ENCODE measurements at regions of chr10 and their contacts with region 1.

Region 1: DNA sequence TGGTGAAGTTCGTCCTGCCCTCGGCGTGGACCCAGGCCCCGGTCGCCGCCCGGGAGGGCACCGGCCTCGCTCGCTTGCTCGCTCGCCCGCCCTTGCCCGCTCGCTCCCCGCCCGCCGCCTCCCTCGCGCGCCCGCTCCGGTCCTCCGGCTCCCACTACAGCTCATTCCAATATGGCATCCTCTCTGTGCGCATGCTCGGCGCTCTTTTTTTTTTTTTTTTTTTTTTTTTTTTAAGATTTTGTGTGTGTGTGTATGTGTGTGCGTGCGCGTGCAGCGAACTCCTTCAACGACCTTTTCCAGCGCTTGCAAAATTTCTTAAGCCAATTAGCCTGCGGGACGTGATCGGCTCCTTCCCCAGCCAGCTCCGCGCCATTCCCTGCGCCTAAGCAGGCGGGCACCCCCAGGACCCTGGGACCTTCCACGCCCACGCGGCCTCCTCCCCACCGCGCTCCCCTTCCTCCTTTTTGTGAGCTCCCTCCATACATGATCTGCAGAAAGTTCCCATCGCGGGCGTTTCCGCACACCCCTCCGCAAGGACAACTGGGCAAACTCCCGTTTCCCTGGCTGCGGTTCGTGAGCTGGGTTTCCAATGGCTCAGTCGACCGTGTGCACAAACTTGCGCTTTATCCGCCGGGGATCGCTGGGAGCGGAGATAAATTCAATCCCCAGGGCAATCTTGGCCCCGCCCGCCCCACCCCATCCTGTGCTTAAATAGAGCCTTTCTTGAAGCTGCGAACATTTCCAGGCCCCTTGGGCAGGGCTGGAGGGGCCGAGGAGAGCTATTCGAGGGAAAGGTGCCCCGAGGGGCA is at the start of gene SFMBT2:
- ATAC-seq: peak; percentile 58 to 86 (median 68)
- H3K4me3 ChIP-seq: peak within 1 kb of the TSS; percentile 61 to 96 (median 95)
- H3K27ac ChIP-seq: peak within 1 kb of the TSS; percentile 75 to 79
- H3K4me1 ChIP-seq: peaks cover 11 to 15% of the 10 kb centered on the region in 2 donors
- total RNA-seq, gene SFMBT2: 0.15 to 16.5 (median 11.9) TPM

Region 2: DNA sequence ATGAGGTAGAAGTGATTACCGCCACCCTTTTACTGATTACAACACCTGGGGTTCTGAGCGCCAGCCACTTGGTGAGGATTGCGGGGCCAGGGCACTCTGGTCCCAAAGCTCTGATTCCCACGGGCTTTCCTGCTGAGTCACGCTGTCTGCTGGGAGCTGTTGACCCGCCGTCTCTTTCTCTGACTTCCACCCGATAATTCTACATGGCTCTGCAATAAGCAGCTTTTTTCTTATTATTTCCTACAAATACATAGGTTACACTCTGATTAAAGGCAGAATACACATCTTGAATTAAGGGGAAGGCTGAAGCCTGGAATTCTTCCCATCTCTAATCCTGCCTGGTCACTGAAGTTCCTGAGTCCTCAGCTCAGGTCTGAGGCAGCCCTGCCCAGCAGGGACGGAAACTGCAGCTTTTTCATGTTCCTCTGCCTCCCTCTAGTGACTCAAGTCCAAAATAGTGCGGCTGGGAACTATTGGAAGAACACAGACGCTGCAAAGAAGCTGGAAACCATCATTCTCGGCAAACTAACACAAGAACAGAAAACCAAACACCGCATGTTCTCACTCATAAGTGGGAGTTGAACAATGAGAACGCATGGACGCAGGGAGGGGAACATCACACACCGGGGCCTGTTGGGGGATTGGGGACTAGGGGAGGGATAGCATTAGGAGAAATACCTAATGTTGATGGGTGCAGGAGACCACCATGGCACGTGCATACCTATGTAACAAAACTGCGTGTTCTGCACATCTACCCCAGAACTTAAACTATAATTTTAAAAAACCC is 1009.3 kb before region 1 on chr10:
- in situ Hi-C with region 1: loop called in 1 of 9 experiments (anchors 25 kb)
- ATAC-seq: peak; percentile 78 to 99 (median 95)
- H3K4me3 ChIP-seq: peak overlapping the region in 3 of 5 donors; percentile 13 to 36 (median 26)
- H3K27ac ChIP-seq: peak overlapping the region in 1 of 2 donors; percentile 35
- H3K4me1 ChIP-seq: peaks cover 8 to 12% of the 10 kb centered on the region in 2 donors

Region 3: DNA sequence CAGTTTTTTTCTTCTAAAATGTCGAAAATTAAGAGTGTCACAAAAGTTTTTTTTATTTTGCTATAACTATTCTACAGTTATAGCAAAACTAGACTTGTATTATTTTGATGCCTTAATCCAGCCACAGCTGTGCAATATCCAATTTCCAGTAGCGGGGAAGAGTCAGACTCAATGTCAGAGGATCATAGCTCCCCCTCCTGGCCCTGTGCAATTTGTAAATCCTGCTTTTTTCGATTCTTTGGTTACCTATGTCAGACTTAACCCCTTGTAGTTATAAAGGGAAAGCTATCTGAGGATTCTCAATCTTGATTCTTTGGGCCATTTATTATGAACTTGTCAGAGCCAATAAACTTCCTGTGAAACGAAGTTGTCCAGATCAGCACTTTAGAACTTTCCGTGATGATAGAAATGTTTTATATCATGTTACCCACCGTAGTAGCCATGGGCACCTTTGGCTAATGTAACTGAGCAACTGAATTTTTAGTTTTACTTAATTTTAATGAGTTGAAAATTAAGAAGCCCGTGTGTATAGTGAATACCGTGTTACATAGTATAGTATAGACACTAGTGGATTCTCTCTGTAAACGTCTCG is 743.3 kb before region 1 on chr10:
- in situ Hi-C with region 1: loop called in 3 of 9 experiments (anchors 25 kb)
- ATAC-seq: peak; percentile 42 to 78 (median 58)
- H3K4me3 ChIP-seq: no peak overlapping the region
- H3K27ac ChIP-seq: no peak overlapping the region
- H3K4me1 ChIP-seq: peaks cover 2 to 6% of the 10 kb centered on the region in 2 donors

Region 4: DNA sequence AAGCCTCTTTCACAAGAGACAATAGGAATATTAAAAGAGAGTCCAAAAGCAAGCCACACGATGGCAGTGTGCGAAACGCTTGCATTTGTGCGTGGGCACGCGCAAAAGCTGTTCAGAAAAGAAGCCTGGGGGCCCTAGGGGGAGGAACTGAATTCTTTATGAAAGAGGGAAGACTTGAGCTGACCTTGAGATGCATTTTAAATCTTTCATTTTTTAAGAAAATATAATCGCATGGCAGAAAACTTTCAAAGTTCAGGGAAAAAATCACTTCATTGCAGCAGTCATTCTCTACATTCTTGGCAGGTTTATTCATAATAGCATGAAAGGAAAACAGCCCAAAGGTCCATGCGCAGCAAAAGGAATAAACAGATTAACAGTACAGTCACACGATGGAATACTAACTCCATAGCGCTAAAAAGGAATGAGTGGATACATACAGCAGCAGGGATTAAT is 624.5 kb before region 1 on chr10:
- in situ Hi-C with region 1: loop called in 1 of 9 experiments (anchors 25 kb)
- ATAC-seq: peak; percentile 60 to 85 (median 72)
- H3K4me3 ChIP-seq: no peak overlapping the region
- H3K27ac ChIP-seq: no peak overlapping the region
- H3K4me1 ChIP-seq: peaks cover 10 to 46% of the 10 kb centered on the region in 2 donors

Region 5: DNA sequence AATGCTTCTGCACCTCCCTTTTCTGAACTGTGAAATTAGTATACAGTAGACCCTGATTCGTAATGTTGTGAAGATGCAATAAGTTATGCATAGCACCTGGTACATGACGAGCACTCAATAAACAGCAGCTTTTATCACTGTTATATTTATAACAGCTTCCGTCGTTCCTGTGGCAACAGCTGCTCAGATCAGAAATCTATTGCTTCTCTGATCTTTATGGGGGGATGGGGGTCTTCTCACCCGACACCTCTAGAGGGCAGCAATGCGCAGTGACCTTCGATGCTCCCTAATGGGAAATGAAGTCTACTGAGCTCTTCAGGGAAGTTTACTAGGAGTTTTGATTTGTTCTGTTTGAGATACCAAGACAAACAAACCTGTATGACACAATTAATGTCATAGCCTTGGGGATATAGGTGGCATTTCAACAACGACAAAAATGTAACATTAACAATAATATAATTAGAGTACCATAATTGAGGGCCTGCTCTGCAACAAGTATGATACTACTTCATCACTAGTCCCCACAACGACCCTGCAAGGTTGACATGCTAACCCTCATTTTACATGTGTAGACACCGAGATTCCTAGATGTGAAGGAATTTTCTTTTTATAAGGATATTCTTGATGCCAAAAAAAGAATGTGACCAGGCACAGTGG is 289.8 kb before region 1 on chr10:
- in situ Hi-C with region 1: loop called in 2 of 9 experiments (anchors 25 kb)
- ATAC-seq: peak in 2 of 8 experiments; percentile 33 to 95
- H3K4me3 ChIP-seq: no peak overlapping the region
- H3K27ac ChIP-seq: no peak overlapping the region
- H3K4me1 ChIP-seq: peaks cover 0 to 4% of the 10 kb centered on the region in 2 donors

Region 6: DNA sequence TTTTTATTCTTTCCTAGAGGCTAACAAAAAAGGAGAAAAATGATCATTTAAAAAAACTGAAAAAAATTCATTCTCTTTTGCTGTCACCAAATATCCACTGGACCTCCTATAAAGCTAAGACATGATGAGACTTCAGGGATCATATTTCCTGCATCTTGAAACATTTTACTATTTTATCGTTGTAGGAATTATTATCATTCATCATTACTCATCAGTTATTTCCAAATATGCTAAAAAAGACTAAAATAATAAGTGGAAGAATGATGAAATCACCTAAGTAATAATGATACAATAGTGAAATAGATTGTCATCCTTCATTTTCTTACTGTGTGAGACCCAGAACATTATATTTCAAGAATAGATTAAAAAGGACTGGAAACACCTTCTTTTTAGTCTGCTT is 435.5 kb after region 1 on chr10:
- in situ Hi-C with region 1: no loop called
- ATAC-seq: no peak
- H3K4me3 ChIP-seq: no peak overlapping the region
- H3K27ac ChIP-seq: no peak overlapping the region
- H3K4me1 ChIP-seq: no peaks in the 10 kb centered on the region

Measured in motor neuron (in vitro differentiated cells).